Prostate gland (tissue), 2 donors: ENCODE measurements at regions of chr18 and their contacts with region 1.

Region 1: DNA sequence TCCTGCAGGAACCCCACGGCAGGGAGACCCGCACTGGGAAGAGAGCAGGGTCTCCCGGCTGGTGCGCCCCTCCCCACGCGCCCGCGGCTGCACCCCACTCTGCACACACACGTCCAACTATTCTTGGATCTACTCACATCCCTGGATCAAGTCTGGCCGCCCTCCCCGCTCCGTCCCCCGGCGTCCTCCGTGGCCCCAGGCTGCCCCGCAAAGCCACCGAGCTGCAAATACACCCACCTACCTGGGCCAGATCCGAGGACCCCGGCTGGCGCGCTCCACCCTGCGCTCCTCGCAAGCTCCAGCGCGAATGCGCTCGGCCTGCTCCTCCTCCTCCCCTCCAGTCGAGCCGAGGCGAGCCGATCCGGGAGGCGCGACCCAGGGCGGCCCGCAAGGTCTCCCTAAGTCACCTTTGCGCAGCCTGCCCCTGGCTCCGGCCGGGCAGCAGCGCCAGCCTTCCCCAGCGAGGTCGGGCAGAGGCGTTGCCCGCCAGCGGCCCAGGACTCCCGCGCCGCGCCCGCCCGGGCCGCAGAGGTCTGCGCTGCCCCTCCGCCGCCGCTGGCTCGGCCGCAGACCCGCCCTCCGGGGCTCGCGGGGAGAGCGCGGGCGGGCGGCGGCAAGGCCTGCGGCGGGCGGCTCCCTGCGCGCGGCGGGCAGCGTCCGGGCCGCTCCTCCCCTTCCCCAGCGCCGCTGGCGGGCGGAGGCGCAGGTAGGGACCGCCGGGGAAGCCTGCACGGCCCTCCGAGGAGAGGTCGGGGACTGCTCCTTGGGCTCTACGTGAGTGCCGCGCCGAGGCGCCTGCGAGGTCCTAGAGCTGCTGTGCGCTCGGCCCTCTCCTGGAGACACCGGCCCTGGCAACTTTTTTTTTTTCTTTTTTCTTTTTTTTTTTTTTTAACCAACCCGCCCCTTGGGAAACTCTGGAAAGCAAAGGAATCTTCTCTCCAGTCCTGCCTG is 126.0 kb downstream of the OSBPL1A start:
- DNase-seq: peak; percentile 68
- H3K4me3 ChIP-seq: peak overlapping the region; percentile 53 to 69
- H3K27ac ChIP-seq: peak overlapping the region; percentile 80 to 89
- H3K4me1 ChIP-seq: no peaks in the 10 kb centered on the region
- H3K27me3 ChIP-seq: no peaks in the 10 kb centered on the region
- CTCF ChIP-seq: peak in 1 of 4 experiments; percentile 11
- POLR2A ChIP-seq: peak; percentile 20

Region 2: GRCh38 chr18:24176727-24177416 is 94.8 kb before region 1 on chr18:
- intact Hi-C with region 1: loop called (anchors 2 kb)
- DNase-seq: peak; percentile 40
- H3K4me3 ChIP-seq: no peak overlapping the region
- H3K27ac ChIP-seq: no peak overlapping the region
- H3K4me1 ChIP-seq: no peaks in the 10 kb centered on the region
- H3K27me3 ChIP-seq: no peaks in the 10 kb centered on the region
- CTCF ChIP-seq: peak; percentile 45 to 59 (median 52)
- POLR2A ChIP-seq: no peak

Region 3: GRCh38 chr18:24190590-24190989 is 81.1 kb before region 1 on chr18:
- intact Hi-C with region 1: loop called (anchors 5 kb)
- DNase-seq: no peak
- H3K4me3 ChIP-seq: no peak overlapping the region
- H3K27ac ChIP-seq: no peak overlapping the region
- H3K4me1 ChIP-seq: no peaks in the 10 kb centered on the region
- H3K27me3 ChIP-seq: no peaks in the 10 kb centered on the region
- CTCF ChIP-seq: no peak
- POLR2A ChIP-seq: no peak

Region 4: DNA sequence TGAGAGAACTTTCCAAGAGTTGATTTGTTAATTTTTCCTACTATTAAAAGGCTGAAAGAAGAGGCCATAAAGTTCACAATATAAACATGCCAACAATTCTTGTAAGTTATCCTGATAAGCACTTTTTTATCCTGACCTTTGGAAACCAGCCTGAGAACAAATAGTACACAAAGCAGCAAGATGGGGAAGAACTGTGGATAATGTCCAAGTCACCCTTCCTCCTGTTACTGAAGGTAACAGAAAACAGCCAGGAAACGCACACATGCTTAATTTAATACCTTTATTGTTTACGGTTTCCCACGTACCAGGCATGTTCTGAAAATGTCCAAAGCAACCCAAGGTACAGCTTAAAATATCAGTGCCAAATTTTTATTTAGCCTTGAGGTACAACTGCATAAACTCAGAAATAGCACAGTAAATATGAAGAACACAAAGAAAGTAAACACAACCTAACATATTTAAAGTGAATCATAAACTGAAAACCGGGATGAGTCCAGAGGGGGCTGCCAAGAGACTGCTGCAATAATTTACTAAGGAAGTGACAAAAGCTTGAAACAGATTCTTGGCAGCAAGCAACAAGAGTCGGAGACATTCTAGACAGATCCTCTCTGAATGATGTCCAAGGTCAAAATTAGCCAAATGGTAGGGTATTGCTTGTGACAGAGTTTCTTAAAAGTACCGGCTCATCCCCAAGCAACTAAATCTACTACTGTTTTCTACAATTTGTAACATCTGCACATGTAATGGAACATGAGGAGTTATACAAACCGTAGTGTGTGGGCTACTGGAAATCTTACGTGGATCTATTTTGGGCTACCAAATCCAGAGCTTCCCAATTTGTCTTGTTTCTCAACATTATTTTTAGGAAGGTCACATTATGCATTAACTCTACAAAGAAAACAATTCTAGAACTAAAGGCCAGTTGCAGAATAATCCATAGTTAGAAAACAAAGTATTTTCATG is 39.6 kb before region 1 on chr18:
- intact Hi-C with region 1: loop called (anchors 5 kb)
- DNase-seq: peak; percentile 37
- H3K4me3 ChIP-seq: no peak overlapping the region
- H3K27ac ChIP-seq: peak overlapping the region in 1 of 2 donors; percentile 12
- H3K4me1 ChIP-seq: no peaks in the 10 kb centered on the region
- H3K27me3 ChIP-seq: no peaks in the 10 kb centered on the region
- CTCF ChIP-seq: no peak
- POLR2A ChIP-seq: no peak